ENCODE measurements at regions of chr21 and their contacts with region 1.

Region 1: GRCh38 chr21:35989138-35989735 is 71.1 kb downstream of the SETD4 start:
- DNase-seq: no peak
- H3K4me3 ChIP-seq: no peak overlapping the region
- H3K27ac ChIP-seq: no peak overlapping the region
- H3K27me3 ChIP-seq: peaks cover 16% of the 10 kb centered on the region
- CTCF ChIP-seq: no peak

Region 2: DNA sequence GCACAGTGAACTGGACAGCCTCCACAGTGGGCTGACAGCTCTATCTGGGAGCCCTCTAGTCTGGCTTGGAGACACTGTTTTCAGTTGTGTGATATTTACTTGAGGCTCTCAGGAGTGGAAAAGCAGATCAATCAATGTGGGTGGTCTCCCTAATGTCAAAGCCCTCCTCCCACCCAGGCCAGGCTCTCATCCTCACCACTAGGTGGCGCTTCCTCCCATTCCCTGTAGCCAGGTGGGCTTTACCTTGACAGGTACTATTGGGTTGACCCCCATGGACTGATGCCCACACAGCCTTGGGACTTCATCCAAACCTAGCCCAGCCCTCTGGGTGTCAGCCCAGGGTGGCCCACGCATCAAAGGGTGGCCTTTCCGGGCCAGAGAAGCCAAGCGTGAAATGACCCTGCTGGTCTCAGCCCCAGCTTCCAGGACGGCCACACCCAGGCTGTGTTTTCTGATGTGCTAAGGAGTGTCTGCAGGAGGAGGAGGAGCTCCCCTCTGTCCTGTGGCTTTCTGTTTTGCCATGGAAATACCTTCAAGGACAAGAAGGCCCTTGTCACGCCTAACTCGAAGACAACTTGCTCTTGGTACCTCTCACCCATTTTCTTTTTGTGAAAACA is 1266.4 kb before region 1 on chr21:
- CTCF ChIA-PET with region 1: no interaction called
- POLR2A ChIA-PET with region 1: interaction called, 11 read pairs
- DNase-seq: no peak
- H3K4me3 ChIP-seq: no peak overlapping the region
- H3K27ac ChIP-seq: no peak overlapping the region
- H3K27me3 ChIP-seq: no peaks in the 10 kb centered on the region
- CTCF ChIP-seq: peak; percentile 35